MCF 10A (cell line): ENCODE measurements at regions of chr12 and their contacts with region 1.

Region 1: GRCh38 chr12:110888256-110888991 is 32.0 kb downstream of the MYL2 start:
- DNase-seq: no peak
- H3K4me3 Mint-ChIP-seq: peak overlapping the region; percentile 86
- H3K27ac Mint-ChIP-seq: peak overlapping the region; percentile 35
- H3K4me1 Mint-ChIP-seq: peaks cover 9% of the 10 kb centered on the region
- H3K27me3 Mint-ChIP-seq: peaks cover 17% of the 10 kb centered on the region
- CTCF ChIP-seq: no peak

Region 2: DNA sequence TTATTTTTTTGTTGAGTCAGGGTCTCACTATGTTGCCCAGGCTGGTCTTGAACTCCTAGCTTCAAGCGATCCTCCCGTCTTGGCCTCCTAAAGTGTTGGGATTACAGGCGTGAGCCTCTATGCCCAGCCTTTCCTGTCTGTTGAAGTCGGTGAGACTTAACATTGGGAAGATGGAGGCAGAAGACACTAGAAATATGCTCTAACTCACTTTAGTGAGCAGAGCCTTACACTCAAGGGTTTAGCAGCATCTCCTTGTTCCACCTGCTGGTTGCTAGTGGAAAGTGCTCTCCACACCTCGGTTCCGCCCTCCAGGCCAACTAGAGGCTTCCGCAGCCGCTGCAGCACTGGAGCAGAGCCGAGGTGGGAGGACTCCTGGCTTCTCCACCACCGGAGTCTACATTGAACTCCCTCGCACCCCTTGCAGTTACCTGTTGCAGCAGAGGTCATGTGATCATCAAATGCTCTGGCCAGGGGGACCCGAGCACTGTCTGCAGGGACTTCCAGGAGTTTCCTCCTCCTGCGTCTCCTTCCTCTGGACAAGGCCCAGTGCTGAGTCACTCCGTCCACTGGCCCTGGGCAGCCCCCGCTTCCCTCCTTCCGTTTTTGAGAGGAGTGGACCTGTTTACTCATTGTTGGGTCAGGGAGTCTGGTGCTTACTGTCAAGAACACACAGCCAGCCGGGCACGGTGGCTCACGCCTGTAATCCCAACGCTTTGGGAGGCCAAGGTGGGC is 190.1 kb before region 1 on chr12:
- CTCF ChIA-PET with region 1: no interaction called
- POLR2A ChIA-PET with region 1: no interaction called
- intact Hi-C with region 1: loop called (anchors 5 kb)
- DNase-seq: peak; percentile 91
- H3K4me3 Mint-ChIP-seq: no peak overlapping the region
- H3K27ac Mint-ChIP-seq: no peak overlapping the region
- H3K4me1 Mint-ChIP-seq: no peaks in the 10 kb centered on the region
- H3K27me3 Mint-ChIP-seq: no peaks in the 10 kb centered on the region
- CTCF ChIP-seq: peak; percentile 55

Region 3: GRCh38 chr12:110704748-110705147 is 183.7 kb before region 1 on chr12:
- CTCF ChIA-PET with region 1: interaction called, 16 read pairs
- POLR2A ChIA-PET with region 1: no interaction called
- intact Hi-C with region 1: loop called (anchors 5 kb)
- DNase-seq: peak; percentile 46
- H3K4me3 Mint-ChIP-seq: no peak overlapping the region
- H3K27ac Mint-ChIP-seq: no peak overlapping the region
- H3K4me1 Mint-ChIP-seq: no peaks in the 10 kb centered on the region
- H3K27me3 Mint-ChIP-seq: no peaks in the 10 kb centered on the region
- CTCF ChIP-seq: peak; percentile 30

Region 4: GRCh38 chr12:110742718-110743570 is 145.5 kb before region 1 on chr12 and contains the start of gene PPP1CC:
- CTCF ChIA-PET with region 1: interaction called, 4 read pairs
- POLR2A ChIA-PET with region 1: interaction called, 6 read pairs
- intact Hi-C with region 1: loop called (anchors 5 kb)
- DNase-seq: peak; percentile 95
- H3K4me3 Mint-ChIP-seq: peak within 1 kb of the TSS; percentile 96
- H3K27ac Mint-ChIP-seq: peak within 1 kb of the TSS; percentile 75
- H3K4me1 Mint-ChIP-seq: peaks cover 39% of the 10 kb centered on the region
- H3K27me3 Mint-ChIP-seq: no peaks in the 10 kb centered on the region
- CTCF ChIP-seq: no peak
- total RNA-seq, gene PPP1CC: 79.4 and 94.6 TPM in 2 replicates

Region 5: DNA sequence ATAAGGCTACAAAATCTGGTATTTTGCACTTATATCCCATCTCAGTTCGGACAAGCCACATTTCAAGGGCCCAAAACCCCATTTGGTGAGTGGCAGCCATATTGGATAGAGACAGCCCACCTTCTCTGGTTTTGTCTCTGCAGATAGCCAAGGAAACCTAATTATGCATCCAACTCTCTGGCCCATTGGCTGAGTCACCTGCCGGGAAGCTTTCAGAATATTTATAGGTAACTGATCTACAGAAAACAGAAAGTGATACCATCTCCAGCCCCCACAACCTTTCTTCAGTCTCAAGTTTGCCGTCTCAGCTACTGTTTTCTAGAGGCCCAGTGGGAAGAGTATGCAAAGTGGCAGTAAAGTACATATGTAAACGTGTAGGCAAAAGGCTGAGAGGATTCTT is 112.0 kb before region 1 on chr12:
- CTCF ChIA-PET with region 1: no interaction called
- POLR2A ChIA-PET with region 1: no interaction called
- intact Hi-C with region 1: no loop called
- DNase-seq: no peak
- H3K4me3 Mint-ChIP-seq: no peak overlapping the region
- H3K27ac Mint-ChIP-seq: no peak overlapping the region
- H3K4me1 Mint-ChIP-seq: no peaks in the 10 kb centered on the region
- H3K27me3 Mint-ChIP-seq: no peaks in the 10 kb centered on the region
- CTCF ChIP-seq: no peak